Activated naive CD8-positive, alpha-beta T cell treated with anti-CD3 and anti-CD28 coated beads, Interleukin-2, amount 10 ng/mL, durations not matched to agents 7 days and 5 days (primary cell): ENCODE measurements at regions of chr1 and their contacts with region 1.

Region 1: GRCh38 chr1:25997828-25998761 is at the start of gene PAFAH2:
- DNase-seq: peak; percentile 94
- ATAC-seq: peak; percentile 94
- H3K4me3 Mint-ChIP-seq: peak within 1 kb of the TSS; percentile 97
- H3K27ac Mint-ChIP-seq: peak within 1 kb of the TSS; percentile 99
- H3K4me1 Mint-ChIP-seq: peaks cover 20% of the 10 kb centered on the region
- H3K27me3 Mint-ChIP-seq: peaks cover 4% of the 10 kb centered on the region
- total RNA-seq, gene PAFAH2: 13.5 to 15.4 TPM

Region 2: DNA sequence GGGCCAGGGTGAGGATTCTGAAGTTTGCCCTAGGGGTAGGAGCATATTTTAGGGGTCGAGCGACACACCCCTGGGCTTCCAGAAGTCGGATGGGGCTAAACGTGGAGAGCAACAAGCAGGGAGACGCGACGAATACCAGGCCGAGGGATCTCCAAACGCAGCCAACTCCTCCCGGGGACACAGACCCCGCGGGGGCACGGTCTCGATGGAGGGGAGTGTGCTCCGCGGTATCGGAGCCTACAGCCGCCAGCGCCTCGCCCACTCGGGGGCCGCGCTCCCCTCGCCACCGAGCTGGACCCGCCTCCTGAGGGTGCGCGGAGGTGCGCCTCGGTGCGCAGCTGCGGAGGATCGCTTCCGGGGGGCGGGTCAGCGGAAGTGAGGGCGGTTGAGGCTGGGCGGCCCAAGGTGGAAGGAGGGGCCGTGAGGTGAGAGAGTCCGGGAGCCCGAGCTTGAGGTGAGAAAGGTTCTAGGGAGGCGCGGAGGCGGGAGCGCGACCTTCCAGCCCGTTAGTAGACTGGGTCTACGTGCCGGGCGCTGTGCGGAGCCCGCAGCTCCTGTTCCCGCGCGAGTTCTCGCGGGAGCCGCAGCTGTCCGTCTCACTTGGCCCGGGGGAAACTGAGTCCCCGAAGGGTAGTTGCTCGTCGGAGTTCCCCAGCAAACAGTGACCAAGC is 178.4 kb before region 1 on chr1 and contains the start of gene MTFR1L:
- POLR2A ChIA-PET with region 1: interaction called, 17 read pairs
- DNase-seq: peak; percentile 94
- ATAC-seq: peak; percentile 83
- H3K4me3 Mint-ChIP-seq: peak within 1 kb of the TSS; percentile 93
- H3K27ac Mint-ChIP-seq: peak within 1 kb of the TSS; percentile 96
- H3K4me1 Mint-ChIP-seq: peaks cover 30% of the 10 kb centered on the region
- H3K27me3 Mint-ChIP-seq: no peaks in the 10 kb centered on the region
- total RNA-seq, gene MTFR1L: 40.8 to 41.3 TPM

Region 3: GRCh38 chr1:25895365-25895993 is 102.6 kb before region 1 on chr1:
- POLR2A ChIA-PET with region 1: interaction called, 76 read pairs
- DNase-seq: peak; percentile 90
- ATAC-seq: peak; percentile 93
- H3K4me3 Mint-ChIP-seq: no peak overlapping the region
- H3K27ac Mint-ChIP-seq: peak overlapping the region; percentile 75
- H3K4me1 Mint-ChIP-seq: peaks cover 19% of the 10 kb centered on the region
- H3K27me3 Mint-ChIP-seq: no peaks in the 10 kb centered on the region

Region 4: DNA sequence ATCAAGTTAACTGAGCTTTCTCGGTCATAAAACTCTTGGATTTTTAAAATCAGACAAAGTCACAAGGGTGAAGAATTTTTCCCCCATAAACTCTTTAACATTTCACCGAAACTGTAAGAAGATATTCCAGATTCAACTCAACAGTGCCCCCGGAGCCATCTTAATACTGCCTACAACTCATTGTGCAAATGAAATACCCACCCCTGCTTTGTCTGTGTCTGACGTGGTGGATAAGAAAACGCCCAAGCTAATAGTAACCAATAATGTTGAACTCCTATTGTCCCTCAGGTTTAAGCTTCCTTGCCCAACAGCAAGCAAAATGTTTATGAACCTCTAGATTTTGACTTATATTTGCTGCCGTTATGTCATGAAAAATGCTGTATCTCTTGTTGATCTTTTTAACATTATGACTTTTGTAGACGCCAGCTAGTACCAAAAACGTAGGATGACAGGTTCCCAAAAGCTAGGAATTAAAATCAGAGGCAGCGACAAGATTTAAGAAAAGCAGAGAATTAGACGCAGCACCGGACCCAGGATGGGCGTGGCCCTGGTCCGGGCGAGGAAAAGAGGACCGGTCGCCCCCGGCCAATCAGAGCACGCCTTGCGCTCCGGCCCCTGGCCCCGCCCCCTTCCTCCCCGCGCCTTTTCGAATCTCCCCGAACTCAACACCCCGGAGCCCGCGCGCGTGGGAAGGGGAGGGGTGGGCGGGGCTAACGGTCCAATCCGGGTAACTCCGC is 93.0 kb before region 1 on chr1:
- POLR2A ChIA-PET with region 1: interaction called, 52 read pairs
- DNase-seq: peak; percentile 95
- ATAC-seq: peak; percentile 77
- H3K4me3 Mint-ChIP-seq: peak overlapping the region; percentile 95
- H3K27ac Mint-ChIP-seq: peak overlapping the region; percentile 94
- H3K4me1 Mint-ChIP-seq: peaks cover 41% of the 10 kb centered on the region
- H3K27me3 Mint-ChIP-seq: peaks cover 20% of the 10 kb centered on the region

Region 5: DNA sequence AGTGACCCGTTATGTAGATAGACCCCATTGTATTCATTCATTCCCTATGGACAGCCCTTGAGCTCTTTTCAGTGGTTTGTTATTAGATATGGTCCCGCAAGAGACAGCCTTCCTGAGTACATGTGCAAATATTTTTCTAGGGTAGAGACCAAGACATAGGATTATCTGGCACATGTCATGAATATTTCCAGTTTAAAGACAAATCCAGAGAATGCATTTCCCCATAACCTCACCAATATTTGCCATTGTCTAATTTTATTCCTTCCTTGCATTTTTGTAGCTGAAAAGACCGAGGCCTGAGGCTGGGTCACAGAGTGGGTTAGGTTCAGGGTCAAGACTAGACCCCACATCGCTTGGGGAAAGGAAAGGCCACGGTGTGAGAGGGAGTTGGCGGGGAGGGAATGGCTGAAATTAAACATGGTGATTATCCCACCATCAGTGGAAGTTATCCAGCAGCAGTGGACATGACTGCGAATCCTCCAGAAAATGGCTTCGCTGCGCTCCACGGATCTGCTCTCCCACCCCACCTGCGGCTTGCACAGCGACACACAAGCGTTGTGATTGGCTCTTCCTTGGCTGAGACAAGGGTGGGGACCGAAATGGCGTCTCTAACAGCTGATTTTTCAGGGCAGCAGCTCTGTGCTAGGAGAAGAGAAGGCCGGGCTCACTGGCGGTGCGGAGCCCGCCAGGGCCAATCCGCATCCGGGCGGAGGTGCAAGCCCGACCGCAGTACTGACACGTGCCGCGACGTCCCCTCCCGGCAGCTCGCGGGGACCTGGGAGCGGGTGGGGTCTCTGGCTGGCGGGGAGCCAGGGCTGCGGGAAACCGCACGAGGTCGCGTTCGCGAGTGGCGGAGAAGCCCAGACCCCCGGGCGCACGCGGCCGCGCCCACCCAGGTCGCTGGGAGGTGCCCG is 75.8 kb before region 1 on chr1:
- POLR2A ChIA-PET with region 1: interaction called, 15 read pairs
- DNase-seq: peak; percentile 74
- ATAC-seq: peak; percentile 83
- H3K4me3 Mint-ChIP-seq: peak overlapping the region; percentile 86
- H3K27ac Mint-ChIP-seq: peak overlapping the region; percentile 72
- H3K4me1 Mint-ChIP-seq: peaks cover 21% of the 10 kb centered on the region
- H3K27me3 Mint-ChIP-seq: peaks cover 41% of the 10 kb centered on the region

Region 6: GRCh38 chr1:25971066-25971810 is 26.9 kb before region 1 on chr1:
- POLR2A ChIA-PET with region 1: interaction called, 20 read pairs
- DNase-seq: no peak
- ATAC-seq: peak; percentile 81
- H3K4me3 Mint-ChIP-seq: peak overlapping the region; percentile 42
- H3K27ac Mint-ChIP-seq: peak overlapping the region; percentile 83
- H3K4me1 Mint-ChIP-seq: peaks cover 19% of the 10 kb centered on the region
- H3K27me3 Mint-ChIP-seq: no peaks in the 10 kb centered on the region

Region 7: DNA sequence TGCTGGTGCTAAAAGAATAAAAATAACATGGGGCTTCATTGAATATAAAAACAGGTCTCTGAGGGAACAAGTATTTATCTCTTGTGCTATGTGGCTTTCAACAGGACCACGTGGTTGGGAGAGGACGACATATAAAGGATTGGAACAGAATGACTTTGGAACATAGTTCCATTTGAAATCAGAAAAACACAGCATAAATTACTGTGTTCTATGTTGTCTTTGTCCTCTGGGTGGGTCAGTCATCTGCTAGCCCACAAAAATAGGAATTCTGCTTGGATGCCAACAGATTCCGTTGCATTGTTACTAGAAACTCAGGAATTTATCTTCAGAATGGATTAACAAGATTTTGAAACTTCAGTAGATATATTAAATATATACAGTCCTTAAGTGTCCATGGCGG is 241.8 kb after region 1 on chr1:
- POLR2A ChIA-PET with region 1: no interaction called
- DNase-seq: no peak
- ATAC-seq: no peak
- H3K4me3 Mint-ChIP-seq: no peak overlapping the region
- H3K27ac Mint-ChIP-seq: no peak overlapping the region
- H3K4me1 Mint-ChIP-seq: peaks cover 32% of the 10 kb centered on the region
- H3K27me3 Mint-ChIP-seq: no peaks in the 10 kb centered on the region